Common myeloid progenitor, CD34-positive (primary cell): ENCODE measurements at regions of chr7 and their contacts with region 1.

Region 1: GRCh38 chr7:142420559-142421362 is 162.9 kb upstream of the PRSS58 start:
- DNase-seq: peak; percentile 57 to 75 (median 71)
- H3K4me3 ChIP-seq: no peak overlapping the region
- H3K27ac ChIP-seq: no peak overlapping the region
- H3K4me1 ChIP-seq: peaks cover 9 to 46% (median 33%) of the 10 kb centered on the region in 4 experiments
- H3K27me3 ChIP-seq: no peaks in the 10 kb centered on the region

Region 2: GRCh38 chr7:142345811-142346210 is 75.0 kb before region 1 on chr7:
- CTCF ChIA-PET with region 1: interaction called, 10 read pairs
- POLR2A ChIA-PET with region 1: no interaction called
- DNase-seq: peak; percentile 50 to 86 (median 78)
- H3K4me3 ChIP-seq: peak overlapping the region in 2 of 7 experiments; percentile 3 to 27
- H3K27ac ChIP-seq: no peak overlapping the region
- H3K4me1 ChIP-seq: peaks cover 0 to 29% (median 21%) of the 10 kb centered on the region in 4 experiments
- H3K27me3 ChIP-seq: no peaks in the 10 kb centered on the region

Region 3: GRCh38 chr7:142371586-142372377 is 49.0 kb before region 1 on chr7:
- CTCF ChIA-PET with region 1: no interaction called
- POLR2A ChIA-PET with region 1: no interaction called
- DNase-seq: no peak
- H3K4me3 ChIP-seq: no peak overlapping the region
- H3K27ac ChIP-seq: no peak overlapping the region
- H3K4me1 ChIP-seq: peaks cover 0 to 12% (median 10%) of the 10 kb centered on the region in 4 experiments
- H3K27me3 ChIP-seq: no peaks in the 10 kb centered on the region

Region 4: DNA sequence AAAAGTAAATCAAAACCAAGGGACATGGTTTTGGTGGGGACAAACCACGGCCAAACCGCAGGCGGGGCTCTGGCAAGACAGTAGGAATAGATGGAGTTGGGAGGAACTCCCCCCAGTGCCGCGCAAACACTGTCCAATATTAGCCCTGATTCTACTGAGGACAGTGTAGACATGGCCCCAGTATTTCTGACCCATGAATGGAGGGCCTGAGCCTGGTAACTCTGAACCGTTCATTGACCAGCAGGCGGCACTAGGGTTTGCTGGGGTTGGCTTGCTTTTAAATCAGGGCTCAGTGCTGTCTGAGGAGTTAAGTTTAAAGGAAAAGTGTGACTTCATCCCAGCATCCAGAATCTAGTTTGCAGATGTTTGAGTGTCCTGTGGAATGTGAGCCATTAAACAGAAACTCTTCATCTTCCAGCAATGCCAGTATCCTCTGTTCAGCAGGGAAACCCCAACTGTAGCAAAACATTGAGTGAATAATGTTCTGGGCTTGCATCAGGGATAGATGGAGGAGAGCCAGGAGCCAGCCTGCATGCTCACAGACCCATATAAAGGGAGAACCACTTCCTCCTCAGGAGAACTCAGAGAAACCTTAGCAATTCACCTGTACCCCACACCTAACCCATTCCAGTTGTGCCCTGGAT is 15.5 kb before region 1 on chr7:
- CTCF ChIA-PET with region 1: interaction called, 18 read pairs
- POLR2A ChIA-PET with region 1: no interaction called
- DNase-seq: no peak
- H3K4me3 ChIP-seq: no peak overlapping the region
- H3K27ac ChIP-seq: no peak overlapping the region
- H3K4me1 ChIP-seq: peaks cover 3 to 18% (median 17%) of the 10 kb centered on the region in 4 experiments
- H3K27me3 ChIP-seq: no peaks in the 10 kb centered on the region

Region 5: DNA sequence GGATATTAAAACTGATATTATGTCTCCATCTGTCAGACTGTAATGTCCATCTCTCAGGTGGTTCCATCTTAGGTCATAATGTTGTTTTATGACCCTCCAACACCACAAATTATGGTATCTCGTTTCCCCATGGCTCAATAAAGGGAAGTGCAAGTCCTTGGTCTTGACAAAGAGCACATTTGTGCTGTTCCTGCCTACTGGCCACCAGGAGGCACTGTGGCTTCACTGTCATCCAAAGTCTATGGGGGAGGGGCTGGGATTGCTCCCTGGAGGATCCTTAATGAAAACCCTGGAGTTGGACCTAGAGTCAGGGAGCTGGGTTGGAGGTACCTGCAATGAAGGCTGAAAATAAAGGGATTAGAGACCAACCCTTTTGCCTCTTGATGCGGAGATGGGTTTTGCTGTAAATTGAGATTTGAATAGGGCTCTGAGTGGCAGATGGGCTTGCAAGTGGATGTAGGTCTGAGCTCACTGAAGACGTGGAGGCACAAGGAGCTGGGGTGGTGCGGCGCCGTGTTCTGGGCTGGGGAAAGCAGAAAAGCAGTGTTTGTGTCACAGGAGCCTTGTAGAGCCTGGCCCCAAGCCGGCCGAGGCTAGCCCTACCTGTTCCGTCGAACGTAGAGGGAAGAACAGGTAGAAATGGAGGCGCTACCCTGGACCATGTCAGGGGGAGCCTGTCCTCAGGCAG is 17.6 kb after region 1 on chr7:
- CTCF ChIA-PET with region 1: interaction called, 40 read pairs
- POLR2A ChIA-PET with region 1: interaction called, 5 read pairs
- DNase-seq: peak; percentile 69 to 80 (median 77)
- H3K4me3 ChIP-seq: no peak overlapping the region
- H3K27ac ChIP-seq: no peak overlapping the region
- H3K4me1 ChIP-seq: peaks cover 32 to 91% (median 66%) of the 10 kb centered on the region in 4 experiments
- H3K27me3 ChIP-seq: no peaks in the 10 kb centered on the region

Region 6: GRCh38 chr7:142478479-142479072 is 57.8 kb after region 1 on chr7:
- CTCF ChIA-PET with region 1: interaction called, 14 read pairs
- POLR2A ChIA-PET with region 1: interaction called, 4 read pairs
- DNase-seq: peak; percentile 57 to 68 (median 66)
- H3K4me3 ChIP-seq: no peak overlapping the region
- H3K27ac ChIP-seq: no peak overlapping the region
- H3K4me1 ChIP-seq: peaks cover 15 to 91% (median 76%) of the 10 kb centered on the region in 4 experiments
- H3K27me3 ChIP-seq: no peaks in the 10 kb centered on the region